ENCODE measurements at regions of chr6 and their contacts with region 1.

Region 1: DNA sequence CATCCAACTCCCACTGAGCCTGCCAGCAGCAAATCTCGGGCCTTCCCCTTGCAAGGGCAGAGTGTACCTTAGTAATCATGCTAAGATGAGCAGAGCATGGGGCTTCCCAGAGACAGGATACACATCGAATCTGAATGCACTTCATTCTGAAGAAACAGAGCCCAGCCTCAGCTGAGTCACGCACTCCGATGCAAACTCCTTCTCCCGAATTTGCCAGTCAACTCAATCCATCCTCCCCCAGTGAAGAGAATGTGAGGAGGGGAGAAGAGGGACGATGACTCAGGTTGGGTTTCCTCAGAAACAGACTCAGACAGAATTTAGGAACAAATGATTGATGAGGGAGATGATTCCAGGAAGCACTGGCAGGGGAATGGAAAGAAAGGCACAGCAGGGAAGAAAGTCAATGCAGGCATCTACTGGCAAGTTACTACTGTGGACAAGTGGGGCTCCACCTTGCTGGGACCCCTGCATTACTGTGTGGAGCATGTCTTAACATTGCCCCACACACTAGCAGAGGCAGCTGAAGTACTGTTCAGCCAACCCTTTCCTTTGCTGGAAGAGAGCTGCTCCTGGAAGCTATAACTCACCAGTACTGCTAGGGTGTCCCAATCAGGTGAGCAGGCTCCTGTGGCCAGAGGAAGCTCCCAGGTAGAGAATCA is 251.6 kb downstream of the ADGB start:
- DNase-seq: peak; percentile 83
- H3K4me3 Mint-ChIP-seq: no peak overlapping the region
- H3K27ac Mint-ChIP-seq: peak overlapping the region; percentile 86
- H3K4me1 Mint-ChIP-seq: peaks cover 32% of the 10 kb centered on the region
- H3K27me3 Mint-ChIP-seq: peaks cover 7% of the 10 kb centered on the region

Region 2: GRCh38 chr6:146357578-146358430 is 492.6 kb before region 1 on chr6:
- CTCF ChIA-PET with region 1: no interaction called
- POLR2A ChIA-PET with region 1: no interaction called
- intact Hi-C with region 1: loop called (anchors 5 kb)
- DNase-seq: no peak
- H3K4me3 Mint-ChIP-seq: no peak overlapping the region
- H3K27ac Mint-ChIP-seq: no peak overlapping the region
- H3K4me1 Mint-ChIP-seq: peaks cover 4% of the 10 kb centered on the region
- H3K27me3 Mint-ChIP-seq: peaks cover 7% of the 10 kb centered on the region

Region 3: GRCh38 chr6:146950351-146950835 is 100.0 kb after region 1 on chr6:
- CTCF ChIA-PET with region 1: no interaction called
- POLR2A ChIA-PET with region 1: no interaction called
- intact Hi-C with region 1: loop called (anchors 2 kb)
- DNase-seq: peak; percentile 31
- H3K4me3 Mint-ChIP-seq: no peak overlapping the region
- H3K27ac Mint-ChIP-seq: peak overlapping the region; percentile 70
- H3K4me1 Mint-ChIP-seq: peaks cover 14% of the 10 kb centered on the region
- H3K27me3 Mint-ChIP-seq: no peaks in the 10 kb centered on the region

Region 4: GRCh38 chr6:147268254-147268653 is 417.9 kb after region 1 on chr6:
- CTCF ChIA-PET with region 1: no interaction called
- POLR2A ChIA-PET with region 1: no interaction called
- intact Hi-C with region 1: loop called (anchors 1 kb)
- DNase-seq: no peak
- H3K4me3 Mint-ChIP-seq: no peak overlapping the region
- H3K27ac Mint-ChIP-seq: peak overlapping the region; percentile 70
- H3K4me1 Mint-ChIP-seq: peaks cover 18% of the 10 kb centered on the region
- H3K27me3 Mint-ChIP-seq: no peaks in the 10 kb centered on the region

Region 5: DNA sequence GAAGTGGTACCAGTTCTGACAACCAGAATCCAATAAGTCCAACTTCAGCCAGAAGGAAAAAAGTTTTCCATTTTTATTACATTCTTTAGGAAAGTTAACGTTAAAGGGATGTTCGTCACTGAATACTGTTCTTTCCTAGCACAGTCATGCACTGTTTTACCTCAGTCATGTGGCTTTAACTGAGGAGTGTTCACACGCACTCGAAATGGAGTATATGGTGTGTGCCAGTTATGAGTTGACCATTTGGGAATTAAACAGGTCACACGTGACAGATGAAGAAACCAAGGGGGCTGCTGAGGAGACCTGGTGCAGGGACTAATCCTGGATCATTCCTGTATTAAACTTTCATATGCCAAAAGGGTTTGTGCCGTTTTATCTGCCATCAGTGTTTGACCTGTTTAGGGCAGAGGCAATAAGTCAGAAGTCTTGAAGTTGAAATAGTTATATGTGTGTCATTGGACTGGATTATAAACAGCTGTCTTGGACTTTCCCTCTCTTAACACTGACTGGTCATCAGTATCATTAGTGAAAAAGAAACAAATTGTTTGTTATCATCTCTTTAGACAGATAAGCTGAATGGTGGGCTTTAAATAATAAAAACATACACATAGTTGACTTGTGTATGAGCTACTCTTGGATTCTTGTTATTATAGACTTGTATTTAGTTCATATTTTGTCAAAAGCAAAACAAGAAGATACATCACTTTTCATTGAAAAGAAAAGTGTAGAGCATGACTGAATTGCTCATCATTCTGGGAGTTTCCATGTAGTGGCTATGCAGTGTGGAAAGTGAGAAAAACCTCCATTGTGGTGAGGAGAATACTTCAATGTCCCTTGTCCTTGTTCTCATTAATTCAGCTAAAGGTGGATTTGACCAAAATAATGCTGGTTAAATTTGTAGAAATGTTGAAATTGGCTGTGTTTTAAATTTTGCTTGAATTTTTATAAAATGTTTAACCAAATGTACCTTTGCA is 534.7 kb after region 1 on chr6:
- CTCF ChIA-PET with region 1: no interaction called
- POLR2A ChIA-PET with region 1: no interaction called
- intact Hi-C with region 1: loop called (anchors 2 kb)
- DNase-seq: no peak
- H3K4me3 Mint-ChIP-seq: no peak overlapping the region
- H3K27ac Mint-ChIP-seq: peak overlapping the region; percentile 33
- H3K4me1 Mint-ChIP-seq: peaks cover 15% of the 10 kb centered on the region
- H3K27me3 Mint-ChIP-seq: no peaks in the 10 kb centered on the region